Right cardiac atrium (tissue), 5 donors: ENCODE measurements at regions of chr6 and their contacts with region 1.

Region 1: DNA sequence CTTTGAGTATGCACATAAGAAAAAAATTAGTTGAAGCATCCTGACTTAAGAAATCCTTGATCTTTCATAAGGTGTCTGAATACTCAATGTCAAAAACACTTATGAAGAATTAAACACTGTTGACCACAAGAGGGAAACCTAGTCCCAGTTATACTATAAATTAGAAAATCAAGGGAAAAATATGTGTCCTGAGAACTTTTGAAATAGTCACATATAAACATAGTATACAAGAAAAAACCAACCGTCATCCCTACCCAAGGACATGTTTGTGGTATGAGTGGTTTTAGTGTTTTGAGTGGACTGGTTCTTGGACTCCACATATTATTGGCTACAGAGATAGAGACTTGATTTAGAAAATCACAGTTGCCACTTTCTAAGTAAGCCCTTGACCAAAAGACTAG is 7.6 kb upstream of the HLA-DRA start:
- DNase-seq: no peak
- ATAC-seq: no peak
- H3K4me3 ChIP-seq: no peak overlapping the region
- H3K27ac ChIP-seq: no peak overlapping the region
- H3K4me1 ChIP-seq: no peaks in the 10 kb centered on the region
- H3K27me3 ChIP-seq: no peaks in the 10 kb centered on the region

Region 2: GRCh38 chr6:32700391-32701040 is 268.5 kb after region 1 on chr6:
- intact Hi-C with region 1: loop called in 3 of 4 experiments (anchors 5 kb)
- DNase-seq: no peak
- ATAC-seq: peak; percentile 74 to 75
- H3K4me3 ChIP-seq: no peak overlapping the region
- H3K27ac ChIP-seq: no peak overlapping the region
- H3K4me1 ChIP-seq: no peaks in the 10 kb centered on the region
- H3K27me3 ChIP-seq: no peaks in the 10 kb centered on the region

Region 3: DNA sequence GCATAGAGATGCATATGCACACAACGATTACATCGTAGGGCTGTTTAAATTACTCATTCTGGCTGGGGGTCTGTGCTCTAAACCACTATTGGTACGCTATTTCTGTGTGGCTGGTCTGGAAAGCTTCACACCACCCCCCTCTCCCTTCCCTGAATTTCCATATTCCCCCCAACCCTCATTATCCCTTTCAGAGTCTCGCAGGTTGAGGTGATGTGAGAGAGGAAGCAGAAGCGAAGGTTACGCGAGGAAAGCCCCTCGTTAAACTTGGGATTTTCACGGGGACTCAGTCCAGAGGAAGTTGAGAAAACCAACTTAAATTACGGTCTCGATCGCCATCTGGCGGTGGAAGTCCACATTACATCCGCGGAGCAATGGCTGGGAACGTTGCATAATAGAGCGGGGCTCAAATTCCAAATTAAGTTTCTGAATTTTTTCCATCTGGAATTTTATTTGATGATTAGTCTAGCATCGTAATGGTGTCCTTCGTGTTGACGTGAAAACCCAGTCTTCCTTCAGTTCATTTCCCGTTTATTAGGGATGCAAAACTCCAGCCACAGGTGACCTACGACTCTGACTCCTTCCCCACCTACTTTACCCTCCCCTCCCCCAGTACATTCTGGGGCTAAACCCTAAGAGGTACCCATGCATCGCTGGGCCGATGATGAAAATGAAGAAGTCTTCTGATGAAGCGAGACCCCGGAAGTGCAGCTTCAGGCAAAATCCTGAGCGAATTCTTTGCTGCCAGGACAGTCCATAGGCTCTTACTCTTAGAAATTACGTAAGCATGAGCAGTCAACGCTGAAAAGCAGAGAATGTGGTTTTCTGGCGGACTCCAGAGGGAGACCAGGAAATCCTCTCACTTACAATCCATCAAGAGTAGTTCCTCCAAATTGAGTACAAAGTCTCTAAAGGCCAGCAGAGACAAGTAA is 365.1 kb after region 1 on chr6:
- intact Hi-C with region 1: no loop called
- DNase-seq: peak; percentile 67 to 90 (median 85)
- ATAC-seq: peak; percentile 80 to 84
- H3K4me3 ChIP-seq: peak overlapping the region; percentile 19
- H3K27ac ChIP-seq: no peak overlapping the region
- H3K4me1 ChIP-seq: no peaks in the 10 kb centered on the region
- H3K27me3 ChIP-seq: no peaks in the 10 kb centered on the region